Ascending aorta (tissue), 2 donors: ENCODE measurements at regions of chrX and their contacts with region 1.

Region 1: DNA sequence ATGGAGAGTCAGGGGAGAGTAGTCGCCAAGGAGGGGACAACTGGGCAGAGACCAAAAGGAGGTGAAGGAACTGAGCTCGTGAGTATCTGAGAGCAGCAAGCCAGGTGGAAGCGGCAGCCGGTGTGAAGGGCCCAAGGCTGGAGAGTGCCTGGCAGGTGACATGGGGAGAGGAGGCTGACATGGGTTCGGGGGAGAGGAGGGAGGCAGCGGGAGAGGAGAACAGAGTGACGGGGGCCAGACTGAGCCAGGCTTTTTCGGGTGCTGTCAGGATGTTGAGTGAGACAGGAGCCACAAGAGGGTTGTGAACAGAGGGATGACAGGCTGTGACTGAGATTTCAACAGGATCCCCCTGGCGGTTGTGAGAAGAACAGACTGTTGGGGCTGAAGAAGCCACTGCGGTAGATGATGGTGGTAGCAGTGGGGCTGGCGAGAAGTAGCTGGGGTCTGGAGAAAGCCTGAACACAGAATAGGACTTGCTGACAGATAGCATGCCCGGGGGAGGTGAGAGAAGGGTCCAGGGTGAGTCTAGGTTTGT is 5.7 kb downstream of the ELK1 start:
- DNase-seq: peak in 1 of 2 donors; percentile 39
- H3K4me3 ChIP-seq: no peak overlapping the region
- H3K27ac ChIP-seq: no peak overlapping the region
- H3K4me1 ChIP-seq: peaks cover 0 to 7% of the 10 kb centered on the region in 2 donors
- H3K27me3 ChIP-seq: no peaks in the 10 kb centered on the region
- CTCF ChIP-seq: peak in 2 of 3 experiments; percentile 24 to 38

Region 2: DNA sequence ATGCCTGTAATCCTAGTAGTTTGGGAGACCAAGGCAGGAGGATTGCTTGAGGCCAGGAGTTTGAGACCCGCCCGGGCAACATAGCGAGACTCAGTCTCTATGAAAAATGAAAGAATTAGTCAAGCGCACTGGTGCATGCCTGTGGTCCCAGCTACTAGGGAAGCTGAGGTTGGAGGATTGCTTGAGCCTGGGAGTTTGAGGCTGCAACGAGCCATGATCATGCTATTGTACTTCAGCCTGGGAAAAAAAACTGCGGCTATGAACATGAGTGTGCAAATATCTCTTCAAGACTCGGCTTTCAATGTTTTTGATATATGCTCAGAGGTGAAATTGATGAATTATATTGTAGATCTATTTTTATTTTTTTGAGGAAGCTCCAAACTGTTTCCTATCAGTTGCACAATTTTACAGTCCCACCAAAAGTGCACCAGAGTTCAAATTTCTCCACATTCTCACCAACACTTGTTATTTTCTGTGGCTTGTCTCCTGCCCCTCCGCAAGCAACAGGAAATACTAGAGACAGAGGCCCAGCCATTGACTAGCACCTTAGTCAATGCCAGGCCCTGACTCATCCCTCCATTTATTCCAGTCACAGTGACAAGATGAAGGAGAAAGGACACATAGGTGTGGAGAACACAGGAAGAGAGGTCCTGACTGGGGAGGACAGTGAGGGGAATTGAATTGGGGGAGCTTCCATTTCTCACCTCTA is 128.5 kb before region 1 on chrX:
- intact Hi-C with region 1: no loop called
- DNase-seq: no peak
- H3K4me3 ChIP-seq: no peak overlapping the region
- H3K27ac ChIP-seq: no peak overlapping the region
- H3K4me1 ChIP-seq: no peaks in the 10 kb centered on the region
- H3K27me3 ChIP-seq: no peaks in the 10 kb centered on the region
- CTCF ChIP-seq: no peak

Region 3: GRCh38 chrX:47581731-47582647 is 62.6 kb before region 1 on chrX and contains the start of gene TIMP1:
- intact Hi-C with region 1: loop called (anchors 5 kb)
- DNase-seq: peak; percentile 86 to 96
- H3K4me3 ChIP-seq: peak within 1 kb of the TSS; percentile 60 to 70
- H3K27ac ChIP-seq: peak within 1 kb of the TSS; percentile 85 to 90
- H3K4me1 ChIP-seq: peaks cover 0 to 6% of the 10 kb centered on the region in 2 donors
- H3K27me3 ChIP-seq: no peaks in the 10 kb centered on the region
- CTCF ChIP-seq: no peak
- total RNA-seq, gene TIMP1: 1,308 TPM